AG04449 (cell line): ENCODE measurements at regions of chr7 and their contacts with region 1.

Region 1: GRCh38 chr7:85464042-85464651 is 277.3 kb upstream of the SEMA3D start:
- DNase-seq: no peak
- H3K4me3 ChIP-seq: no peak overlapping the region
- CTCF ChIP-seq: no peak

Region 2: DNA sequence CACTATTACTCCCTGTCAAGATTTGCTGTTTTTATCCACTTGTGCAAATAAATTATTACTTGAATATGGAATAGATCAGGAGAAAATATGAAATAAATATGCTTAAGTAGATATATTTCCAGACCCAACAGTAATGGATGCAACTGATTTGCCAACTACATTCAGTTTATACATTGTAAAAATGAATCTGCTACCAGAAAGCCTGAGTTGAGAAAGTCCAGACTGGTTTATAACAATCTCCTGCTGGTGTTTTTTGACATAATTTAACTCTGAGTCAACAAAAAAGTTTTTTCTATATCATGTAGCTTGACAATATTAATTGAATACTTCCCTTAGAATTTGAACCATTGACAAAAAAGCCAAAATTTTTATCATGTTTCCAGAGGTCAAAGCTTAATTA is 11.5 kb before region 1 on chr7:
- CTCF ChIA-PET with region 1: interaction called, 14 read pairs
- POLR2A ChIA-PET with region 1: no interaction called
- DNase-seq: no peak
- H3K4me3 ChIP-seq: no peak overlapping the region
- CTCF ChIP-seq: no peak